ENCODE measurements at regions of chr13 and their contacts with region 1.

Region 1: GRCh38 chr13:34555988-34556387 is 386.1 kb upstream of the NBEA start:
- DNase-seq: no peak
- ATAC-seq: no peak
- H3K4me3 ChIP-seq: no peak overlapping the region
- H3K27ac ChIP-seq: no peak overlapping the region
- H3K4me1 ChIP-seq: no peaks in the 10 kb centered on the region
- H3K27me3 ChIP-seq: no peaks in the 10 kb centered on the region
- CTCF ChIP-seq: no peak

Region 2: DNA sequence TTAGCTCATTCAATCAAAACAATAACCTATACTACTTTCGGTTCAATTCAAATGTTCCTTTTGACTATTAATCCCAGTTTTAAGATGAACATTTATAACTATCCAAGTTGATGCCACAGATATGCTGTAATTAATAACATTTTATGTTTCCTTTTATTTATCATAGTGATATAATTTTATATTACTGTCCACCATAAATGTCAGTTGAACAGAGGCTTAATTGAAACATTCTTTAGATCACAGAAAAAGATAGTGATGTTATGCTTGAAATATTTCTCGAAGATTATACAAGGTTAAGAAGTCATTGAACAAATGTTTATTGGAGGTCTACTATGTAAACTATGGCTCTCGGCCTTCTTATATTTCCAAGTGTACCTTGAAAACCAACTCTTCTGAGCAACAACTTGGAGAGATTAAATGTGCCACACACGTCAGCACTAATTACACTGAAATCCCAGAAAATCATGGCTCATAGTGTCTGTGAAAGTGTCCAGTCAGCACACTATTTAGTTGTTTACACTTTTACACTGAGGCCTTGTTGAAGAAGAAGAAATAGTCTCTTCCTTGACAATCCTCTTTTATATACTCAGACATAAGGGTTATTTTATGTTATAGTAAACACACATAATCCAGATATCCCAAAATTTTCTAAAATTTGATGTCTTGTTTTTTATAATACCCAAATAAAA is 355.0 kb after region 1 on chr13:
- CTCF ChIA-PET with region 1: no interaction called
- POLR2A ChIA-PET with region 1: interaction called, 16 read pairs
- intact Hi-C with region 1: no loop called
- DNase-seq: no peak
- ATAC-seq: no peak
- H3K4me3 ChIP-seq: no peak overlapping the region
- H3K27ac ChIP-seq: no peak overlapping the region
- H3K4me1 ChIP-seq: peaks cover 6% of the 10 kb centered on the region; the same call in 1 of the 2 replicates
- H3K27me3 ChIP-seq: no peaks in the 10 kb centered on the region
- CTCF ChIP-seq: no peak